Ovary (tissue), 10 donors: ENCODE measurements at regions of chr16 and their contacts with region 1.

Region 1: GRCh38 chr16:75483222-75483621 is 12.0 kb downstream of the CHST6 start:
- DNase-seq: no peak
- H3K4me3 ChIP-seq: no peak overlapping the region
- H3K27ac ChIP-seq: no peak overlapping the region
- H3K4me1 ChIP-seq: no peaks in the 10 kb centered on the region
- H3K27me3 ChIP-seq: no peaks in the 10 kb centered on the region
- CTCF ChIP-seq: no peak
- EP300 ChIP-seq: no peak
- POLR2A ChIP-seq: no peak

Region 2: GRCh38 chr16:75466760-75467159 is 16.5 kb before region 1 on chr16:
- intact Hi-C with region 1: loop called in 1 of 4 experiments (anchors 2 kb)
- DNase-seq: no peak
- H3K4me3 ChIP-seq: no peak overlapping the region
- H3K27ac ChIP-seq: no peak overlapping the region
- H3K4me1 ChIP-seq: no peaks in the 10 kb centered on the region
- H3K27me3 ChIP-seq: no peaks in the 10 kb centered on the region
- CTCF ChIP-seq: no peak
- EP300 ChIP-seq: no peak
- POLR2A ChIP-seq: no peak

Region 3: DNA sequence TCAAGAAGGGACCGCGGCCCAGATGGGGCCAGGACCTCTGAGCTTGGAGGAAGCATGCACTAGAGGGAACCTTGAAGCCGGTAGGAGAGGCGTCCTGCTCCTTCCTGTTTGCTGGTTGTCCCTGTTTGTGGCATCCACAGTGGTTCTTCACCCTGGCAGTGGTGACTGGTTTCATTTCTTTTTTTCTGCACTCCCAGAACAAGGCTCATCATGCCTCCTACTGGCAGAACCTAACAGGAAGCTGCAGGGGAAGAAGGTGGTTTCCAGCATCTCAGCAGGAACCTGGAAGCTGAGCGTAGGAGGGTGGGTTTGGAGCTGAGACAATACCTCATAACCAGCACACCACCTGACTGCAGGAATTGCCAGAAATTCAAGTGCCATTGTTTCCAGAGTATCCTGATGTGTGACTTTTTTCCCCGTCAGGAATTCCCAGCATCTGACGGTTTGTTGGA is 67.0 kb after region 1 on chr16:
- intact Hi-C with region 1: no loop called
- DNase-seq: no peak
- H3K4me3 ChIP-seq: no peak overlapping the region
- H3K27ac ChIP-seq: no peak overlapping the region
- H3K4me1 ChIP-seq: no peaks in the 10 kb centered on the region
- H3K27me3 ChIP-seq: no peaks in the 10 kb centered on the region
- CTCF ChIP-seq: no peak
- EP300 ChIP-seq: no peak
- POLR2A ChIP-seq: no peak